CD8-positive, alpha-beta T cell (primary cell): ENCODE measurements at regions of chr10 and their contacts with region 1.

Region 1: GRCh38 chr10:102673819-102674511 is 29.7 kb downstream of the TRIM8 start:
- DNase-seq: peak; percentile 33 to 92 (median 72)
- ATAC-seq: peak; percentile 88
- H3K4me3 ChIP-seq: peak overlapping the region; percentile 32 to 47
- H3K4me3 Mint-ChIP-seq: peak overlapping the region; percentile 78
- H3K27ac ChIP-seq: peak overlapping the region; percentile 58 to 68
- H3K27ac Mint-ChIP-seq: peak overlapping the region; percentile 86
- H3K4me1 ChIP-seq: peaks cover 41% of the 10 kb centered on the region
- H3K4me1 Mint-ChIP-seq: peaks cover 58% of the 10 kb centered on the region
- H3K27me3 ChIP-seq: no peaks in the 10 kb centered on the region
- H3K27me3 Mint-ChIP-seq: no peaks in the 10 kb centered on the region
- CTCF ChIP-seq: no peak

Region 2: DNA sequence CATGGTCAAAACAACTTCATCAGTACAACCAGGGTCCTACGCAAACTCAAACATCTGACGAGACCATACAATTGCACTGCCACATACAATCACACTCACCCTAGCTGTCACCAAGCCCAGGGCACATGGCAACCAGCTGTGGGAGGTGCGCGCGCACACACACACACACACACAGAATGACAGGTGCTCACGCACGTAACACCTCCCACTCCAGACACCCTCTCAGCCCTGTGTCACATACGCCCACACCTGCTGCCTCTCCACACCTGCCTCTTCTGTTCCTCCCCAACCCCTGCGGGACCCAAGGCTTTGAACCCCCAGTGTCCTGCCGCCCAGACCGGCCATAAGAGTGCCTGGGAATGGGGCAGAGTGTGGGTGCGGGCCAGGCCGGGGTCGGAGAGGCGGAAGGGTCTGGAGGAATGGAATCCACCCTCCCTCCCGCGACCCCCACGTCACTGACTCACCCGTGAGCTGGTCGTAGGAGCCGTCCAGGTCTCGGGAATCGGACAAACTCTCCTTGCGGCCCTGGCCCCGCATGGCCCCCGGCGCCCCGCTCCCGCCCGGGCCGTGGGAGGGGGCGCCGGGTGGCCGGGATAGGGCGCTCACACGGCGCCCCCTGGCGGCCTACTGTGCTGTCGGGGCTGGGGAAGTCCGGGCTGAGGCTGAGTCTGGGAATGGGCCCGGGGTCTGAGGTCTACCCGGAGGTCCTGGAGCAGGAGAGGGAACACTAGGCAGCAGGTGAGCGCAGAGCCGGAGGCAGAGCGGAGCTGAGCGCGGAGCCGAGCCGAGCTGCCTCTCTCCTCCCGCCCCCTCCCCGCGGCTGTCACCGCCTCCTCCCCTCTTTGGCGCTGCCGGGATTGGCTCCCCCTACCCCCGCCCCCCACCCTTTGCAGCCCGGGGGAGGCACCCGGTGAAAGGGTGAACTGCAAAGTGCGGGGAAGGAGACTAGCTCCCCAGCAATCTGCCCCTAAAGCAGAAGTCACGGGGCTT is 830.6 kb before region 1 on chr10 and contains the start of gene KCNIP2:
- CTCF ChIA-PET with region 1: no interaction called
- POLR2A ChIA-PET with region 1: no interaction called
- intact Hi-C with region 1: no loop called
- DNase-seq: peak in 7 of 9 experiments; percentile 36 to 80 (median 65)
- ATAC-seq: peak; percentile 73
- H3K4me3 ChIP-seq: peak within 1 kb of the TSS in 1 of 2 experiments; percentile 39
- H3K4me3 Mint-ChIP-seq: peak within 1 kb of the TSS; percentile 67
- H3K27ac ChIP-seq: no peak within 1 kb of the TSS
- H3K27ac Mint-ChIP-seq: peak within 1 kb of the TSS; percentile 27
- H3K4me1 ChIP-seq: peaks cover 33% of the 10 kb centered on the region
- H3K4me1 Mint-ChIP-seq: peaks cover 47% of the 10 kb centered on the region
- H3K27me3 ChIP-seq: no peaks in the 10 kb centered on the region
- H3K27me3 Mint-ChIP-seq: peaks cover 8% of the 10 kb centered on the region
- CTCF ChIP-seq: peak; percentile 72
- total RNA-seq, gene KCNIP2: 0.87 to 1.1 TPM

Region 3: DNA sequence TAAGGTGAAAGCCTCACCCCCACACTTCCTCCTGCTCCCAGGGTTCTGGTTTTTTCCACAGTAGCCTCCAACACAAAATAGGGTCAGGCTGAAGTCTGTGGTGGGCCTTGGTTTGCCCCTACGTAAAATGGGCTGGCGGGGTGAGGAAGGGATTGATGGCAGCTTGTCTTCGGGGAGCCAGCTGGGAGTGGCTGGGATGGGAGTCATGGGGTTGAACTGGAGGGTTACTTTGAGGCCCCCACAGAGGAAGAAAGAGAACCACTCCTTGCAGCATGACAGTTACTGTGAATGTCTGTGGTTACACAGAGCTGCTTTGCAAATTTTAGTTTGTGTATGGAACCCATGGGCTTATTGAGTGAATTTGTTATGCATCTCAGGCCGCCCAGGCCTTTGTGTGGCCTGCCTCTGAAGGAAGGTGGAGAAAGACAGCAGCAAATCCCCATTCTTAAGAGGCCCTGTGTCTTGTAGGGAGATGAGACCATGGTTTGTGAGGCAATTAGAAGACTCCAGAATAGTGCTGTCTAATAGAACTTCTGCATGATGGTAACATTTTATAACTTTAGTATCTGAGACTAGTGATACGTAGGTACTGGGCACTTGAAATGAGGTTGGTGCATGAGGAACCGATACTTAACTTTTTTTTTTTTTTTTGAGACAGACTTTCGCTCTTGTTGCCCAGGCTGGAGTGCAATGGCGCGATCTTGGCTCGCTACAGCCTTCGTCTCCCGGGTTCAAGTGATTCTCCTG is 21.6 kb before region 1 on chr10:
- CTCF ChIA-PET with region 1: interaction called, 82 read pairs
- POLR2A ChIA-PET with region 1: interaction called, 5 read pairs
- intact Hi-C with region 1: loop called in 1 of 2 experiments (anchors 2 kb)
- DNase-seq: peak in 1 of 9 experiments; percentile 47
- ATAC-seq: peak; percentile 37
- H3K4me3 ChIP-seq: peak overlapping the region in 1 of 2 experiments; percentile 13
- H3K4me3 Mint-ChIP-seq: peak overlapping the region; percentile 78
- H3K27ac ChIP-seq: peak overlapping the region; percentile 12 to 87
- H3K27ac Mint-ChIP-seq: peak overlapping the region; percentile 97
- H3K4me1 ChIP-seq: peaks cover 74% of the 10 kb centered on the region
- H3K4me1 Mint-ChIP-seq: peaks cover 76% of the 10 kb centered on the region
- H3K27me3 ChIP-seq: no peaks in the 10 kb centered on the region
- H3K27me3 Mint-ChIP-seq: no peaks in the 10 kb centered on the region
- CTCF ChIP-seq: no peak

Region 4: GRCh38 chr10:102660888-102661657 is 12.9 kb before region 1 on chr10:
- CTCF ChIA-PET with region 1: interaction called, 82 read pairs
- POLR2A ChIA-PET with region 1: interaction called, 8 read pairs
- intact Hi-C with region 1: loop called in 1 of 2 experiments (anchors 1 kb)
- DNase-seq: peak in 7 of 9 experiments; percentile 46 to 79 (median 60)
- ATAC-seq: peak; percentile 75
- H3K4me3 ChIP-seq: peak overlapping the region; percentile 40 to 41
- H3K4me3 Mint-ChIP-seq: peak overlapping the region; percentile 75
- H3K27ac ChIP-seq: peak overlapping the region; percentile 33 to 62
- H3K27ac Mint-ChIP-seq: peak overlapping the region; percentile 92
- H3K4me1 ChIP-seq: peaks cover 43% of the 10 kb centered on the region
- H3K4me1 Mint-ChIP-seq: peaks cover 40% of the 10 kb centered on the region
- H3K27me3 ChIP-seq: no peaks in the 10 kb centered on the region
- H3K27me3 Mint-ChIP-seq: no peaks in the 10 kb centered on the region
- CTCF ChIP-seq: no peak

Region 5: GRCh38 chr10:102713814-102714620 is 40.1 kb after region 1 on chr10 and contains the start of gene ARL3:
- CTCF ChIA-PET with region 1: interaction called, 13 read pairs
- POLR2A ChIA-PET with region 1: interaction called, 12 read pairs
- intact Hi-C with region 1: loop called (anchors 1 kb)
- DNase-seq: peak; percentile 79 to 98 (median 94)
- ATAC-seq: peak; percentile 89
- H3K4me3 ChIP-seq: peak within 1 kb of the TSS; percentile 96 to 98
- H3K4me3 Mint-ChIP-seq: peak within 1 kb of the TSS; percentile 97
- H3K27ac ChIP-seq: peak within 1 kb of the TSS; percentile 84 to 91
- H3K27ac Mint-ChIP-seq: peak within 1 kb of the TSS; percentile 94
- H3K4me1 ChIP-seq: peaks cover 21% of the 10 kb centered on the region
- H3K4me1 Mint-ChIP-seq: peaks cover 59% of the 10 kb centered on the region
- H3K27me3 ChIP-seq: no peaks in the 10 kb centered on the region
- H3K27me3 Mint-ChIP-seq: no peaks in the 10 kb centered on the region
- CTCF ChIP-seq: peak; percentile 65
- total RNA-seq, gene ARL3: 0.49 to 0.75 TPM